ENCODE measurements at regions of chr12 and their contacts with region 1.

Region 1: GRCh38 chr12:751192-751998 is 984 bp upstream of the WNK1 start:
- DNase-seq: peak; percentile 77 to 83 (median 78)
- H3K4me3 ChIP-seq: peak overlapping the region; percentile 67 to 96
- H3K4me3 Mint-ChIP-seq: no peak overlapping the region
- H3K27ac ChIP-seq: peak overlapping the region; percentile 89
- H3K27ac Mint-ChIP-seq: no peak overlapping the region
- H3K4me1 ChIP-seq: peaks cover 33% of the 10 kb centered on the region
- H3K4me1 Mint-ChIP-seq: peaks cover 2 to 15% (median 12%) of the 10 kb centered on the region in 4 donors
- H3K27me3 ChIP-seq: no peaks in the 10 kb centered on the region
- H3K27me3 Mint-ChIP-seq: no peaks in the 10 kb centered on the region

Region 2: DNA sequence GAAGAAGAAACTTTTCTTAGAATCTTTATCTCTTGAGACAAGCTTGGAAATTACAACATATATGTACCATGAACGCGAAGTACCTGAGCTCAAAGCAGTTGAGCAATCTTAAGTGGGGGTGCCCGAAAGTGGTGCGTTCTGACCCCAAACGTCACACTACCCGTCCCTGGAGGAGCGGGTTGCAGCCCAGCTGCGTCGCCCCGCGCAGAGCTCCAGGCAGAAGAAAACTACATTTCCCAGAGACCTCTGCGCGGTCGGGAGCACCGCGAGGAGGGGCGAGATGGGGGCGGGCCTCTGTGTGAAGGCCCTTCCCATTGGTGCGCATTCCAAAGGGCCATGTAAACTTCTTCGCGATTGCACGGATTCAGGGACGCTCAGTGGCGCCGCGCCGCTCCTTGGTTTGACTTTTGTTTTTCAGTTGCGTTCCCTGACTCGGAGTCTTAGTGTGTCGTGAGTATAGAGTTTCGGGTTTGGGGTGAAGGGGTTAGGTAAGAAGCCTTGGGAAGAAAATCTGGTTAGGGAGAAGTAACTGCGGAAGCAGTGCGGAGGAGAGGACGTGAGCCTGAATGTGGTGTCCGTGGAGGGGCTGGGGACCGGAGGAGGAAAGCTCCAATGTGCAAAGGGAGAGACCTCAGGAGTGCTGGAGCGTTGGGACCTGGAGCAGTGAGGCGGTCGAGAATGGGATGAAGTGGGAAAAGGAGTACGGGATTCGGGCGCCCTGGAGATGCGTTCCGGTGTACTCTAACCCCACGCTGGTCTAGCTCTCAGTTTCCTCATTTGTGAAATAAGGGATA is 350.0 kb before region 1 on chr12 and contains the start of gene CCDC77:
- CTCF ChIA-PET with region 1: no interaction called
- POLR2A ChIA-PET with region 1: no interaction called
- intact Hi-C with region 1: loop called (anchors 5 kb)
- DNase-seq: peak; percentile 92 to 97 (median 95)
- H3K4me3 ChIP-seq: peak within 1 kb of the TSS; percentile 88 to 98
- H3K4me3 Mint-ChIP-seq: peak within 1 kb of the TSS in 1 of 8 donors; percentile 5
- H3K27ac ChIP-seq: peak within 1 kb of the TSS; percentile 68
- H3K27ac Mint-ChIP-seq: no peak within 1 kb of the TSS
- H3K4me1 ChIP-seq: peaks cover 17% of the 10 kb centered on the region
- H3K4me1 Mint-ChIP-seq: peaks cover 0 to 3% (median under 1%) of the 10 kb centered on the region in 4 donors
- H3K27me3 ChIP-seq: no peaks in the 10 kb centered on the region
- H3K27me3 Mint-ChIP-seq: no peaks in the 10 kb centered on the region
- total RNA-seq, gene CCDC77: 7.9 to 13.0 TPM

Region 3: GRCh38 chr12:614411-614970 is 136.9 kb before region 1 on chr12:
- CTCF ChIA-PET with region 1: interaction called, 37 read pairs
- POLR2A ChIA-PET with region 1: interaction called, 16 read pairs
- intact Hi-C with region 1: loop called (anchors 1 kb)
- DNase-seq: peak in 3 of 5 donors; percentile 10 to 18 (median 18)
- H3K4me3 ChIP-seq: no peak overlapping the region
- H3K4me3 Mint-ChIP-seq: no peak overlapping the region
- H3K27ac ChIP-seq: no peak overlapping the region
- H3K27ac Mint-ChIP-seq: peak overlapping the region in 2 of 7 donors; percentile 36 to 66
- H3K4me1 ChIP-seq: peaks cover 20% of the 10 kb centered on the region
- H3K4me1 Mint-ChIP-seq: peaks cover 16 to 41% (median 28%) of the 10 kb centered on the region in 4 donors
- H3K27me3 ChIP-seq: no peaks in the 10 kb centered on the region
- H3K27me3 Mint-ChIP-seq: no peaks in the 10 kb centered on the region

Region 4: DNA sequence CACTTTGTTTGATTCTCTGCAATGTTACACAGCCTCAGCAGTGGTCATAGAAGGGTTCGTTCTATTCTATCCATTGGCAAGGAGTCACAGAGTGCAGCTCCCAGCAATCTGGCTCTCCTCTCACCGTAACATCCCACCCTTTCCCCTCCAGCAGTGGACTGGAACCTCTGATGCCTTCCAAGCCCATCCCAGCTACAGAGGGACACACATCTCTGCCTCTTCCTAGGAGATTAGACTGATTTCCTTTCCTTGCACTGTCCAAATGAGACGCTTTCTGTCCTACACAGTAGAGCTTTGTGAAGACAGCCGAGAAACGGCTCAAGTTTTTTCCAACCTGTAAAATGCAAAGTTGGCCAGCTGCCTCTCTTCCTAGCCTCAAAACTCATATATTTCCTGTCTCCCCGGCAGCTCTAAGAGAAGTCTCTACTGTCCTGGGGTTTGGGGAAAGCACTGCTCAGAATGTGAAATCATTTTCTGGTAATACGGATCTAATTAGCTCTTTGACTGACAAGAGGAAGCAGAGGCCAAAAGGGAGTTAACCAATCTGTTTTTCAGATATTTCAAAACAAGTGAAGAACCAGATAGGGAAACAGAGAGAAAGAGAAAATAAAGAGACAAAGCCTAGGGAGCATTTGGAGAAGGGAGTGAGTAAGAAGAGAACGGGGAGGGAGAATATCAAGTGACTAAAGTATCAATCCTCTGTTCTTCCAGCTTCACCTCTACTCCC is 88.7 kb before region 1 on chr12:
- CTCF ChIA-PET with region 1: interaction called, 43 read pairs
- POLR2A ChIA-PET with region 1: interaction called, 48 read pairs
- intact Hi-C with region 1: no loop called
- DNase-seq: no peak
- H3K4me3 ChIP-seq: peak overlapping the region in 1 of 2 donors; percentile 16
- H3K4me3 Mint-ChIP-seq: peak overlapping the region; percentile 80 to 93 (median 86)
- H3K27ac ChIP-seq: peak overlapping the region; percentile 49
- H3K27ac Mint-ChIP-seq: peak overlapping the region; percentile 14 to 95 (median 90)
- H3K4me1 ChIP-seq: peaks cover 50% of the 10 kb centered on the region
- H3K4me1 Mint-ChIP-seq: peaks cover 29 to 58% (median 48%) of the 10 kb centered on the region in 4 donors
- H3K27me3 ChIP-seq: no peaks in the 10 kb centered on the region
- H3K27me3 Mint-ChIP-seq: no peaks in the 10 kb centered on the region

Region 5: DNA sequence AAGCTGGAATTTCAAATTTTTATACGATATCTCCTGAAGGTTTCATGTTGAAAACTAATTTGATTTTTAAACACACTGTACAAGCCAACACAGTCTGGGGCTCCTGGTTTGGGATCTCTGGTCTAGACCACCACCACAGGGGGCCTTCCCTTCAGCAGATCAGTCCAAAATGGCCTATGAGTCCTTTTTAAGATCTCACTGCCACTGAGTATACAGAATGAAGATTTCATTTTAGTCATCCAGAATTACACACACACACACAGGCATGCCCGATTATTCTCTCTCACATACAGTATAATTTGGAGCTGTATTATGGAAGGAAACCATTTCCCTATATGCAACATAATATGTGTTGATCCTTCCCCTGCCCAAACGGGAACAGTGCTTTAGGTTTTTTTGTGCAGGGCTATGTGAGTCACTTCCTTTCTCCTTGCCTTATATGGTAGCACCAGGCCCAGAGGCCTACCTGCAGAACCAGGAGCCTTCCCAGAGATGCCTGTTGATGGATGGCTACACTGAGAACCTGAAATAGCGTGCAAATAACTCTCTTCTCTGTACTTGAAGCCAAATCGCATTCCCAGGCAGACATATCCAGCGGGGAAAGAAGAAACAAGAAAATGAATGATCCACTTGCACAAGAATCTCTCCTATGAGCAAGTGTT is 27.1 kb before region 1 on chr12:
- CTCF ChIA-PET with region 1: interaction called, 59 read pairs
- POLR2A ChIA-PET with region 1: interaction called, 138 read pairs
- intact Hi-C with region 1: loop called (anchors 1 kb)
- DNase-seq: peak in 1 of 5 donors; percentile 20
- H3K4me3 ChIP-seq: no peak overlapping the region
- H3K4me3 Mint-ChIP-seq: peak overlapping the region in 6 of 8 donors; percentile 1 to 49 (median 32)
- H3K27ac ChIP-seq: peak overlapping the region; percentile 34
- H3K27ac Mint-ChIP-seq: peak overlapping the region; percentile 59 to 93 (median 85)
- H3K4me1 ChIP-seq: peaks cover 61% of the 10 kb centered on the region
- H3K4me1 Mint-ChIP-seq: peaks cover 46 to 82% (median 65%) of the 10 kb centered on the region in 4 donors
- H3K27me3 ChIP-seq: no peaks in the 10 kb centered on the region
- H3K27me3 Mint-ChIP-seq: no peaks in the 10 kb centered on the region

Region 6: DNA sequence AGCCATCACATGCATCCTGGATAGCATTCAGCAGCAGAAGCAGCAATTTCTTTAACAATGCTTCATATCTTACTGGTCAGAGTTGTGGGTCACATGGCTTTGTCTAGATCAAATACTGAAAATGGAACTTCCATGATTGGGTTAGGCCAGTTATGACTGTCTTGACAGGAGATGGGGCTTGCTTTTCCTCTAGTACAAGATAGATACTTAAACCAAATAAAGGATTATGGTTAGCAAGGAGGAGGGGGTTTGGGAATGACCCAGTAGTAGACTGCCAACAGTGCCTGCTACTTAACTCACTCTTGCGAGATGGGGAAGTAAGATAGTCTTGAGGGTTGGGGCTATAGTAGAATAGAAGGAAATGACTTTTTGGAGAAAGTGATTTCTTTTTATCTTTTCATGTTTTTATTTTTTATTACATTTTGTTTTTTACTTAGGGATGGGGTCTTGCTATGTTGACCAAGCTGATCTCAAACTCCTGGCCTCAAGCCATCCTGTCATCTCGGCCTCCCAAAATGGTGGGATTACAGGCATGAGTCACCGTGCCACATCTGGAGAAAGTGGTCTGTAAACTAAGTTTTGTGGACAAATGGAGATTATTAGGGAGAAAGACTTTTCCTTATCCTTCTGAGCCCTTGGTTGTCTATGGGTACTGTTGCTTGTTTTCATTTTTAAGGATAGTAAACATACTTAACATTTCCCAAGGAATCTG is 38.6 kb after region 1 on chr12:
- CTCF ChIA-PET with region 1: interaction called, 8 read pairs
- POLR2A ChIA-PET with region 1: interaction called, 14 read pairs
- intact Hi-C with region 1: loop called (anchors 5 kb)
- DNase-seq: no peak
- H3K4me3 ChIP-seq: no peak overlapping the region
- H3K4me3 Mint-ChIP-seq: peak overlapping the region; percentile 15 to 74 (median 57)
- H3K27ac ChIP-seq: no peak overlapping the region
- H3K27ac Mint-ChIP-seq: peak overlapping the region; percentile 60 to 81 (median 66)
- H3K4me1 ChIP-seq: peaks cover 95% of the 10 kb centered on the region
- H3K4me1 Mint-ChIP-seq: peaks cover 52 to 90% (median 75%) of the 10 kb centered on the region in 4 donors
- H3K27me3 ChIP-seq: no peaks in the 10 kb centered on the region
- H3K27me3 Mint-ChIP-seq: no peaks in the 10 kb centered on the region

Region 7: DNA sequence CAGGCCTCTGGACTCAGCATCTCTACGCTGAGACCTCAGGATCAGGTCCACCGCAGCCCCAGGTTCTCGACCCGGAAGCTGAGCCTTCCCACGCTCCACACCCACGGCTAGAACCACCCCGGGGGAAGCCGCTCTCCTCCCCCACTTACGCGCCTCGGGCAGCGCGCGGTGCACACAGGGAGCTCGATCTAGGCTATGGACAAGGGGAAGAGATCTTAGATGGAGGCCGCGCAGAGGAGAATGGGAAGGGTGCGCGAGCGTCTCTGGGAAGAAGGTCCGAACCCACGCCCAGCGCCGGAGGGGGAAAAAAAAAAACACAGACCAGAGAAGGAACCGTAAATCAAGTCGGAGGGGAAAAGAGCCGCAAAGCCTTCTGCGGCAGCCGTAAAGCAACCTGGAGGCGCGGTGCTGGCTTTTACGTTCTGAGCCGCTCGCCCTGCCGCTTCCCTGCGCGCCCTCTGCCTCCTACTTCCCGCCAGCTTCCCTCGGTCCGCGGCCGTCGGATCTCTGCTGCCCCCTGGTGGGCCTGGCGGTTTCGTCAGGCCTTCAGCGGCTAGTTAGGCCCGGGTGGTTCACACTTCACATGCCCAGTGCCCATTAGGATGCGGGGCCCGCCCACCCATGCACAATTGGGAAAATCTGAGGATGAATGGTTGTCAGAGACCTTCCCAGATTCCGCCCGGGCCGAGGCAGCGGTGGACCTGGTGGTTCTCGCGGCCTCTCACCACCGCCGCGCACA is 198.2 kb after region 1 on chr12 and contains the start of gene RAD52:
- CTCF ChIA-PET with region 1: no interaction called
- POLR2A ChIA-PET with region 1: interaction called, 16 read pairs
- intact Hi-C with region 1: loop called (anchors 1 kb)
- DNase-seq: peak; percentile 96 to 97 (median 96)
- H3K4me3 ChIP-seq: peak within 1 kb of the TSS; percentile 70 to 98
- H3K4me3 Mint-ChIP-seq: peak within 1 kb of the TSS; percentile 92 to 97 (median 95)
- H3K27ac ChIP-seq: peak within 1 kb of the TSS; percentile 75
- H3K27ac Mint-ChIP-seq: peak within 1 kb of the TSS; percentile 93 to 96 (median 94)
- H3K4me1 ChIP-seq: peaks cover 22% of the 10 kb centered on the region
- H3K4me1 Mint-ChIP-seq: peaks cover 18 to 41% (median 28%) of the 10 kb centered on the region in 4 donors
- H3K27me3 ChIP-seq: no peaks in the 10 kb centered on the region
- H3K27me3 Mint-ChIP-seq: no peaks in the 10 kb centered on the region
- total RNA-seq, gene RAD52: 30.7 to 31.5 TPM

Region 8: DNA sequence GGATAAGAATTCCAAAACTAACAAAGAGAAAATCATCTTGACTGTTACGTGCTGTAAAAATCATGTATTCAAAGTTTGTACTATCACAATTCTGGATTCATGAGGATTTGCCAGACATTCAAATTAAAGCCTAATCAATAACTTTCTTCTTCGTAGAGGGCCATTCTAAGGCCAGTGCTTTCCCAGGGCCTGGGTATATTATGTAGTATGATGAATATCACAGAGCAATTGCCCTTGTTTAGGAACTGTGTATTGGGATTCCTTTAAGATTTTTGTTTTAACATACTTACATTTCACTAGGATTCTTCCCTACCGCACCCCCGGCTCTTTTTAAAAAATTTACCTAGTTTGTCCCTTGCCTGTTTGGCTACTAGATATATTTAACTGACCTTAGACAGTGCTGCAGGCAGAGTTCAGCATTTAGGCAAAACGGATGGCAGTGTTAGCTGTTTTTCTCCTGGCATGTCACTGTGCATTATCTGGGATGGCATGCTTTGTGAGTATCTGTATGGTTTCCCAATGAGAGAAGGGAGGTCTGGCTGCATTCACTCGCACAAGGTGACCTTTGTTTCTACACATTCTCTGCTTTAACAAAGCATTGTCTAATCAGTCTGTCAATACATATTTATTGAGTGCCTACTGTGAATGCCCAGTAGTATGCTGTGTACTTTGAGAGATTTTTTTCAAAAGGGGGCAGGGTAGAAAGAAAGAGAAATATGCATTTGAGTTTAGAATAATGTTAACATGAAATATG is 302.9 kb after region 1 on chr12:
- CTCF ChIA-PET with region 1: no interaction called
- POLR2A ChIA-PET with region 1: no interaction called
- intact Hi-C with region 1: no loop called
- DNase-seq: no peak
- H3K4me3 ChIP-seq: no peak overlapping the region
- H3K4me3 Mint-ChIP-seq: no peak overlapping the region
- H3K27ac ChIP-seq: no peak overlapping the region
- H3K27ac Mint-ChIP-seq: peak overlapping the region in 3 of 7 donors; percentile 1 to 21 (median 13)
- H3K4me1 ChIP-seq: no peaks in the 10 kb centered on the region
- H3K4me1 Mint-ChIP-seq: peaks cover 0 to 10% (median 5%) of the 10 kb centered on the region in 4 donors
- H3K27me3 ChIP-seq: no peaks in the 10 kb centered on the region
- H3K27me3 Mint-ChIP-seq: no peaks in the 10 kb centered on the region